H1 (cell line): ENCODE measurements at regions of chr1 and their contacts with region 1.

Region 1: GRCh38 chr1:14778898-14779865 is 180.7 kb downstream of the KAZN start:
- DNase-seq: peak; percentile 43 to 93
- H3K4me3 ChIP-seq: no peak overlapping the region
- H3K27ac ChIP-seq: no peak overlapping the region
- H3K4me1 ChIP-seq: peaks cover 3 to 22% (median 9%) of the 10 kb centered on the region in 4 experiments; a peak in 6 of 7 replicates
- H3K27me3 ChIP-seq: no peaks in the 10 kb centered on the region
- CTCF ChIP-seq: peak; percentile 71 to 88 (median 85)
- EP300 ChIP-seq: no peak
- POLR2A ChIP-seq: no peak
- RAD21 ChIP-seq: peak; percentile 65 to 83

Region 2: GRCh38 chr1:14689996-14690615 is 89.1 kb before region 1 on chr1:
- CTCF ChIA-PET with region 1: no interaction called
- POLR2A ChIA-PET with region 1: no interaction called
- DNase-seq: no peak
- H3K4me3 ChIP-seq: no peak overlapping the region
- H3K27ac ChIP-seq: no peak overlapping the region
- H3K4me1 ChIP-seq: no peaks in the 10 kb centered on the region
- H3K27me3 ChIP-seq: no peaks in the 10 kb centered on the region
- CTCF ChIP-seq: no peak
- EP300 ChIP-seq: no peak
- POLR2A ChIP-seq: no peak
- RAD21 ChIP-seq: no peak

Region 3: GRCh38 chr1:14733048-14733778 is 46.0 kb before region 1 on chr1:
- CTCF ChIA-PET with region 1: interaction called, 13 read pairs
- POLR2A ChIA-PET with region 1: no interaction called
- DNase-seq: peak; percentile 57 to 69
- H3K4me3 ChIP-seq: peak overlapping the region in 3 of 4 experiments; percentile 15 to 41 (median 29); a peak in 5 of 8 replicates
- H3K27ac ChIP-seq: no peak overlapping the region; the same call in 1 of the 2 replicates
- H3K4me1 ChIP-seq: peaks cover 13 to 20% (median 17%) of the 10 kb centered on the region in 4 experiments
- H3K27me3 ChIP-seq: peaks cover 0 to 17% (median 14%) of the 10 kb centered on the region in 4 experiments; a peak in 6 of 7 replicates
- CTCF ChIP-seq: no peak
- EP300 ChIP-seq: no peak
- POLR2A ChIP-seq: no peak
- RAD21 ChIP-seq: no peak

Region 4: GRCh38 chr1:14738225-14738624 is 41.0 kb before region 1 on chr1:
- CTCF ChIA-PET with region 1: interaction called, 13 read pairs
- POLR2A ChIA-PET with region 1: no interaction called
- DNase-seq: no peak
- H3K4me3 ChIP-seq: no peak overlapping the region
- H3K27ac ChIP-seq: no peak overlapping the region
- H3K4me1 ChIP-seq: peaks cover 21 to 35% (median 27%) of the 10 kb centered on the region in 4 experiments
- H3K27me3 ChIP-seq: peaks cover 0 to 19% (median 13%) of the 10 kb centered on the region in 4 experiments; a peak in 6 of 7 replicates
- CTCF ChIP-seq: no peak
- EP300 ChIP-seq: no peak
- POLR2A ChIP-seq: no peak
- RAD21 ChIP-seq: no peak

Region 5: GRCh38 chr1:14765773-14766172 is 13.4 kb before region 1 on chr1:
- CTCF ChIA-PET with region 1: interaction called, 77 read pairs
- POLR2A ChIA-PET with region 1: interaction called, 6 read pairs
- DNase-seq: no peak
- H3K4me3 ChIP-seq: no peak overlapping the region
- H3K27ac ChIP-seq: no peak overlapping the region
- H3K4me1 ChIP-seq: peaks cover 8 to 19% (median 13%) of the 10 kb centered on the region in 4 experiments
- H3K27me3 ChIP-seq: no peaks in the 10 kb centered on the region; a peak in 1 of 7 replicates
- CTCF ChIP-seq: no peak
- EP300 ChIP-seq: no peak
- POLR2A ChIP-seq: no peak
- RAD21 ChIP-seq: no peak

Region 6: DNA sequence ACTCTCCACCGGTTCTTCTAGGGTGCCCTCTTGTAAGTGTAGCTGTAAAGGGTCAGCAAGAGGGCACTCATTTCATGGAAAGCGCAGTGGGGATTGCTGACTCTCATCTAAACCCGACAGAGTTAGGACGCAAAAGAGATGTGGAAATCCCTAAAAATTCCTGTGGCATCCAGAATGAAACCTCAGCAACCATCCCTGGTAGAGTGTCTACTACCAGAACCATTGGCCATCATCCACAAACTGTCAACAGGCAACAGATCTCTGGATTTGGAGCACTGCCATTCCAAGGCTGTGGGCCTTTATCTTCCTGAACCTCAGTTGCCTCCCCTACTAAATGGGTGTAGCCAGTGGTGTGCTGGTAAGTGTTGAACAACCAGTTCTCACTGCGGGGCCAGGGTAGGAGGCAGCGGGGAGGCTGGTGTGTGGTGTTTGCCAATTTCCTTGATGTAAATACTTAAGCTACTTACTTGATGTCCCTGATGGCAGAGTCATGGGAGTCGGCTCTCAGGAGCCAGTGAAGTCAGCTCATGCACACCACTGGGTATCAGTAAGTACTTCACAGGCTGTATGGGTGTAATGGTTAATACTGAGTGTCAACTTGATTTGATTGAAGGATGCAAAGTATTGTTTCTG is 15.1 kb after region 1 on chr1:
- CTCF ChIA-PET with region 1: interaction called, 18 read pairs
- POLR2A ChIA-PET with region 1: no interaction called
- DNase-seq: no peak
- H3K4me3 ChIP-seq: no peak overlapping the region
- H3K27ac ChIP-seq: no peak overlapping the region
- H3K4me1 ChIP-seq: peaks cover 0 to under 1% (median 0%) of the 10 kb centered on the region in 4 experiments; a peak in 1 of 7 replicates
- H3K27me3 ChIP-seq: no peaks in the 10 kb centered on the region
- CTCF ChIP-seq: no peak
- EP300 ChIP-seq: no peak
- POLR2A ChIP-seq: no peak
- RAD21 ChIP-seq: no peak

Region 7: DNA sequence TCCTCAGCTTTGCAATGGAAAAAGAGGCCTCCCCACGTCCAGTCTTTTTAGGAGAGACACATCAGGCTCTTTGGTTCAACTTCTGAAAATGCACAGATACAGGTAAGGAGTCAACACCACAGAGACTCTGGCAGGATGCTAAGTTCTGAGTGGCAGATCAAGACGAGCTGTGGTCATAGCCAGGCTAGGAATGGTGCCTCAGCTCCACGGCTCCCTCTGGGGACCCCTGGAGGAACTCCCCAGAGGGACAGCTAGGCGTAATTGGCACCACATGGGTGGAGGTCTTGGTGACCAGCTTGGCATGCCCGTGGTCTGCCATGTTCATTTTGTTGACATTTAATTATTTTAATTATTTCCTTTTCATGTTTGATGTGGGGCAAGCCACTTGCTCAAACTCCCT is 25.4 kb after region 1 on chr1:
- CTCF ChIA-PET with region 1: interaction called, 20 read pairs
- POLR2A ChIA-PET with region 1: no interaction called
- DNase-seq: peak; percentile 19 to 64
- H3K4me3 ChIP-seq: no peak overlapping the region
- H3K27ac ChIP-seq: no peak overlapping the region
- H3K4me1 ChIP-seq: no peaks in the 10 kb centered on the region
- H3K27me3 ChIP-seq: no peaks in the 10 kb centered on the region
- CTCF ChIP-seq: peak; percentile 70 to 82 (median 80)
- EP300 ChIP-seq: no peak
- POLR2A ChIP-seq: no peak
- RAD21 ChIP-seq: peak; percentile 72 to 81